Activated CD4-positive, alpha-beta T cell treated with anti-CD3 and anti-CD28 coated beads for 36 hours (primary cell): ENCODE measurements at regions of chr16 and their contacts with region 1.

Region 1: GRCh38 chr16:50681021-50681885 is at the start of gene SNX20:
- DNase-seq: peak; percentile 80
- ATAC-seq: peak; percentile 69
- H3K4me3 Mint-ChIP-seq: peak within 1 kb of the TSS; percentile 78
- H3K27ac Mint-ChIP-seq: peak within 1 kb of the TSS; percentile 94
- H3K4me1 Mint-ChIP-seq: peaks cover 85% of the 10 kb centered on the region
- H3K27me3 Mint-ChIP-seq: no peaks in the 10 kb centered on the region
- total RNA-seq, gene SNX20: 43.3 to 48.9 TPM

Region 2: DNA sequence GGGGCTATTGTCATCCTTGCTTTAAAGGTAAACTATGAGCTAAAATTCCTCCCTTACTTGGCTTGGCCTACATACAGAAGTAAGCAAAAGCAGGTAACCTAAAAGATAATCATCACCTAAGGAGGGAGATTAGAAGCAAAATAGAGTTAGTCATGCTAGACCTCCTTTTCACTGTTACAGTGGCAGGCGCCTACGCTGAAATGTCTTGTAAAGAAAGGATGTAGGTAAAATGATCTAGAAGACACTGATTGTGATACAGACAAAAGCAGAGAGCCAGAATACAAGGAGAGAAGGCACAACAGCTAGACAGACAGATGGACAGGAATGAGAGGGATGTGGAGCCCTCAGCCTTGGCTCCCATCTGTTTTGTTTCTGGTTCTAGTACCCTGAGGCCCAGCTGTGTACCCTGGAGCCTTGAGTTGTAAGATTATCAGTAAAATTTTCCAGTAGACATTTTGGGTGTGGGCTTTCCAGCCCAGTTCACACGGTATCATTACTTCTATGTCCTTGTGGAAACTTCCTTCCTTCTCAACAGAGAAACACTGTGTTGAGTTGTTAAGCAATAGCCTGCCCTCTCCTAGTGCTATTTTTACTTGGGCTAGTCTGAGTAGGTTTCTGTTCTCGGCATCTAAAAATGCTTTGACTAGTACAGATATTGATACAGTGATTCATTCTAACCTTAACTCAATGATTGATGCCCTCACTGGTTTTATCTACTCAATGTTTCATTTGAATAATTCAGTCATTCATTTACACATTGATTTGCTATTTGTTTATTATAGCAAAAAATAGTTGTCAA is 1315.3 kb before region 1 on chr16:
- CTCF ChIA-PET with region 1: no interaction called
- POLR2A ChIA-PET with region 1: no interaction called
- intact Hi-C with region 1: no loop called
- DNase-seq: no peak
- ATAC-seq: no peak
- H3K4me3 Mint-ChIP-seq: no peak overlapping the region
- H3K27ac Mint-ChIP-seq: no peak overlapping the region
- H3K4me1 Mint-ChIP-seq: no peaks in the 10 kb centered on the region
- H3K27me3 Mint-ChIP-seq: peaks cover 7% of the 10 kb centered on the region

Region 3: DNA sequence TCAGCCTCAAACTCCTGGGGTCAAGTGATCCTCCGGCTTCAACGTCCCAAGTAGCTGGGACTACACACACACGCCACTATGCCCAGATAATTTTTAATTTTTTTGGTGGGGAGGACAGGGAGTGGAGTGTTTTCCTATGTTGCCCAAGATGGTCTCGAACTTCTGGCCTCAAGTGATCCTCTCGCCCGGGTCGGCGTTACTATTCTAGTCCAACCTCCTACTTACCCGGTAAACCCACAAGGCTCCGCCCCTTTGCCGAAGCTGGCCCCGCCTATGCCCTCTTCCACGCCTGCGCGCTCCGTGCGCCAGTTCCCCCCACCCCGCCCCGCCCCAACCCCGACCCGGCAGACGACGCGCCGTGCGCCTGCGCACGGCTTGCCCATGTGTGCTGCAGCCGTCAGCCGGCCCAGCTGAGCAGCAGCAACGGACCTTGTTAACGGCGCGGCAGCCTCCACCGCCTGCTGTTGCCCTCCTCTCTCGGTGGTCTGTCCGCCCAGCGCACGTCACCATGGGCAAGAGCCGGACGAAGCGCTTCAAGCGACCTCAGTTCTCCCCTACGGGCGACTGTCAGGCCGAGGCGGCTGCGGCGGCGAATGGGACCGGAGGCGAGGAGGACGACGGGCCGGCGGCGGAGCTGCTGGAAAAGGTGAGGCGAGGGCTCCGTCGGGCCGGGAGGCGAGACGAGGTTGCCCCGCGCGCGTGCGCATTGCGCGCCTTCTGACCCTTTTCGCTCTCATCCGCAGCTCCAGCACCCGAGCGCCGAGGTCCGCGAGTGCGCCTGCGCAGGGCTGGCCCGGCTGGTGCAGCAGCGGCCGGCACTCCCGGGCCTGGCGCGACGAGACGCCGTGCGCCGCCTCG is 615.4 kb before region 1 on chr16 and contains the start of gene HEATR3:
- CTCF ChIA-PET with region 1: no interaction called
- POLR2A ChIA-PET with region 1: no interaction called
- intact Hi-C with region 1: loop called in 1 of 2 experiments (anchors 5 kb)
- DNase-seq: peak; percentile 97
- ATAC-seq: peak; percentile 86
- H3K4me3 Mint-ChIP-seq: peak within 1 kb of the TSS; percentile 87
- H3K27ac Mint-ChIP-seq: peak within 1 kb of the TSS; percentile 88
- H3K4me1 Mint-ChIP-seq: peaks cover 33% of the 10 kb centered on the region
- H3K27me3 Mint-ChIP-seq: no peaks in the 10 kb centered on the region
- total RNA-seq, gene HEATR3: 22.2 to 28.7 TPM

Region 4: GRCh38 chr16:50696575-50697420 is 15.5 kb after region 1 on chr16:
- CTCF ChIA-PET with region 1: interaction called, 7 read pairs
- POLR2A ChIA-PET with region 1: interaction called, 4 read pairs
- intact Hi-C with region 1: loop called (anchors 1 kb)
- DNase-seq: peak; percentile 81
- ATAC-seq: peak; percentile 51
- H3K4me3 Mint-ChIP-seq: peak overlapping the region; percentile 71
- H3K27ac Mint-ChIP-seq: peak overlapping the region; percentile 88
- H3K4me1 Mint-ChIP-seq: peaks cover 83% of the 10 kb centered on the region
- H3K27me3 Mint-ChIP-seq: no peaks in the 10 kb centered on the region

Region 5: GRCh38 chr16:50859628-50860360 is 178.5 kb after region 1 on chr16:
- CTCF ChIA-PET with region 1: no interaction called
- POLR2A ChIA-PET with region 1: no interaction called
- intact Hi-C with region 1: no loop called
- DNase-seq: no peak
- ATAC-seq: no peak
- H3K4me3 Mint-ChIP-seq: no peak overlapping the region
- H3K27ac Mint-ChIP-seq: no peak overlapping the region
- H3K4me1 Mint-ChIP-seq: no peaks in the 10 kb centered on the region
- H3K27me3 Mint-ChIP-seq: peaks cover 3% of the 10 kb centered on the region